ENCODE measurements at regions of chr21 and their contacts with region 1.

Region 1: DNA sequence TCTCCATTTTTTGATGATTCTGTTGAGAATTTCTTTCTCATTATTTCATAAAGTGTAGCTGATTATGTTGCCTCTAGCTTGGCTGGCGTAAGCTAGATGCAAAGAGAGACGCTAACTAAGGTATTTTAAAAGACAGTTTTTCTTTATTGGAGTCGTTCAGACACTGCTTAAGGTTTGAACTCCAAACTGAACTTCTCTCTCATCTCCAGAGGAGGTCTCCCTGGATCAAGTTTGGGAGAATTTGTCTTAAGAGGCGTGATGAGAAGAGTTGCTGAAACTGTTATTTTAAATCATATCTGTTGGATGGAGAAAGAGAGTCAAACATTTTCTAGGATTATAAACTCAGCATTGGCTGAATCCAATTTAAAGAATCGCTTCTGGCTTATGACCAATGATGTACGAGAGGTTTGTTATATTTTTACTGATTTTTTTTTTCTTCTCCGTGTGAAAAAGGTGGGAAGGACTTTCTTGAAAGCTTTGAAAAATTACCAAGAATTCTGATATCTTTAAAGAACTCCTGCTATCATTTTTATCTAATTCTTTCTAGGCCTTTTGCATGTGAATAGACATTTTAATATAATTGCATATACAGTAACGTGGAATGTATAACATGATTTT is 34.0 kb downstream of the MAP3K7CL start:
- H3K4me3 ChIP-seq: no peak overlapping the region
- H3K27ac ChIP-seq: no peak overlapping the region
- H3K4me1 ChIP-seq: no peaks in the 10 kb centered on the region
- CTCF ChIP-seq: no peak

Region 2: GRCh38 chr21:28771790-28772501 is 392.5 kb before region 1 on chr21:
- CTCF ChIA-PET with region 1: no interaction called
- POLR2A ChIA-PET with region 1: no interaction called
- H3K4me3 ChIP-seq: no peak overlapping the region
- H3K27ac ChIP-seq: no peak overlapping the region
- H3K4me1 ChIP-seq: no peaks in the 10 kb centered on the region
- CTCF ChIP-seq: no peak

Region 3: DNA sequence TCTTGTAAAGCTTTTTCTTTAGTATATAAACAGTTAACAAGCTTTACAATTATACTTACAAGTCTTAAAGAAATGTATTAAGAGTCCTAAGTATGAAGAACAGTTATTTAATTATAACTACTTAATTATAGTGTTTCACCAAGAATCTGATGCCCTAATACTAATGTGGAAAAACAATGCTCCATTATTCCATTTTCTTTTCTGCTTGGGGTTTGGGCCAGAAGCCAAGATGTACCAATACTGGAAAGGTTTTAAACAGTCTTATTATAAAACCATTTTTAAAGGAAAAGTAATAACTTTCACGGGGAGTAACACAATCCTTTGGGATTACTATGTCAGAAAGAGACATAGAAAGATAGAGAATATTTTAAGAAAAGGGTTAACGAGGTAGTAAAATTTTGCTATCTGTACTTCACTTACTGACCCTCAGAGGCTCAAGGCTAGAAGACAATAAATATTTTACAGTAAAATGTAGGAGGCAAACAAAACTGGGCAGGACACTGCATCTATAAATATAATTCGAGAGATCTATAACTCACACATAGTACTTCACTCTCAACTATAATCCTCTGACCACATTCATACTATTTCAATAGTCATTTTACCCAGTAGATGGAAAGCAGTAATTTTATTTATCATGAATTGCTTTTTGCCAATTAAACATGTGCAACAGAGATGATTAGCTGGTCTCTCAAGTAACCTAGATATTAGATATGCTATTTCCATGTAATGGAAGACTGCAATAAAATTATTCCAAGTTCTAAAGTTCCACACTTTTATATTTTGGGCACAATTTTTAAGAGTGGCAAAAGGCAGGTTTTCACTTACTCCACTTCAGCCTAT is 235.6 kb before region 1 on chr21:
- CTCF ChIA-PET with region 1: no interaction called
- POLR2A ChIA-PET with region 1: no interaction called
- H3K4me3 ChIP-seq: no peak overlapping the region
- H3K27ac ChIP-seq: no peak overlapping the region
- H3K4me1 ChIP-seq: peaks cover 11% of the 10 kb centered on the region; the same call in 1 of the 2 replicates
- CTCF ChIP-seq: no peak

Region 4: GRCh38 chr21:29091032-29091431 is 73.4 kb before region 1 on chr21:
- CTCF ChIA-PET with region 1: interaction called, 20 read pairs
- POLR2A ChIA-PET with region 1: no interaction called
- H3K4me3 ChIP-seq: no peak overlapping the region
- H3K27ac ChIP-seq: no peak overlapping the region
- H3K4me1 ChIP-seq: no peaks in the 10 kb centered on the region
- CTCF ChIP-seq: no peak

Region 5: DNA sequence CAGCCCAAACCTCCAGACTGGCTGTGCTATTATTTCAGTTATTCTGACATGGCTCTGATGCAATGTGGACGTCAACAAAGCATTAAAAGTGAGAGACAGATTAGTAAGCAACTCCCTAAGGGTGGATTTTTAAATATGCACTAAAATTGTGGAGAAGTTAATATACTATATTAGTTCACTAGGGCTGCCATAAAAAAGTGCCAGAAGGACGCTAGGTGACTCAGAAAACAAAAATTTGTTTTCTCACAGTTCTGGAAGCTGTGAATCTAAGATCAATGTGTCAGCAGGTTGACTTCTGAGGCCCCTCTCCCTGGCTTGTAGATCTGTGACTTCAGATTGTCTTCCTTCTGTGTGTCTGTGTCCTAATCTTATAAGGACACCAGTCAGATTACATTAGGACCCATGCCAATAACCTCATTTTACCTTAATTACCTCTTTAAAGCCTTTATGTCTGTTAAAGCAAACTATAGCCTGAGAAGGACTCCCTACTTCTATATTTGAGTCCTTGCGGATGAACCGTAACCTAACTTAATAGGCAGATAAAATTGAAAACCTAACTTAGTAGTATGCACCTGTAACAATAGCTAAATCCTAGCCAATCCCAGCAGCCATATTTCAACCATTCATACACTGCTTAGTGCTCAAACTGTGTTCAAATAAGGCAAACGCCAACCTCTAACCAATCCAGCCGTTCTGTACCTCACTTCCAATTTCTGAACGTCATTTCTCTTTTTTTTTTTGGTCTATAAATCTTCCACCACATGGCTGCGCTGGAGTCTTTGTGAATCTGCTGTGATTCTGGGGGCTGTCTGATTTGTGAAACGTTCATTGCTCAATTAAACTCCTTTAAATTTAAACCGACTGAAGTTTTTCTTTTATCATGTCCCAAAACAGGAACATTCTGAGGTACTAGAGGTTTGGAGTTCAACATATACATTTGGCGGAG is 68.4 kb after region 1 on chr21:
- CTCF ChIA-PET with region 1: interaction called, 10 read pairs
- POLR2A ChIA-PET with region 1: no interaction called
- H3K4me3 ChIP-seq: no peak overlapping the region
- H3K27ac ChIP-seq: no peak overlapping the region
- H3K4me1 ChIP-seq: no peaks in the 10 kb centered on the region
- CTCF ChIP-seq: no peak

Region 6: DNA sequence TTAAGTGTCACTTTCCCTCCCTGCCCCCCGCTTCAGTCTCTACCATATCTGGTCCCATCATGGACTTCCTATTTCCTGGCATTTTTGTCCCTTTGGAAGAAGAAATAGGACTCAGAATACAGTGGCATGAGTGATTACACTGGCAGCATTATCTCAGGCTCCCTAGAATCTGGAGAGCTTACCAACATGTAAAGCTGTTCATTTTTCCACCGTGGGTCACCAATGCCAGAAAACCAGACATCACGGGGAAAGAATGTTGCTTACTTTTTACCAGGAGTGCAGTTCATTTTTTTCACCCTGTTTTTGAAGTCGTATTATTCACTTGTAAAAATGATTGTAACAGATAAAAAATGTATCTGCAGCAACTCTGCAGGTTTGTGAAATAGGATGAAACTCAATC is 179.1 kb after region 1 on chr21:
- CTCF ChIA-PET with region 1: interaction called, 41 read pairs
- POLR2A ChIA-PET with region 1: no interaction called
- H3K4me3 ChIP-seq: no peak overlapping the region
- H3K27ac ChIP-seq: no peak overlapping the region
- H3K4me1 ChIP-seq: peaks cover 12% of the 10 kb centered on the region
- CTCF ChIP-seq: no peak

Region 7: DNA sequence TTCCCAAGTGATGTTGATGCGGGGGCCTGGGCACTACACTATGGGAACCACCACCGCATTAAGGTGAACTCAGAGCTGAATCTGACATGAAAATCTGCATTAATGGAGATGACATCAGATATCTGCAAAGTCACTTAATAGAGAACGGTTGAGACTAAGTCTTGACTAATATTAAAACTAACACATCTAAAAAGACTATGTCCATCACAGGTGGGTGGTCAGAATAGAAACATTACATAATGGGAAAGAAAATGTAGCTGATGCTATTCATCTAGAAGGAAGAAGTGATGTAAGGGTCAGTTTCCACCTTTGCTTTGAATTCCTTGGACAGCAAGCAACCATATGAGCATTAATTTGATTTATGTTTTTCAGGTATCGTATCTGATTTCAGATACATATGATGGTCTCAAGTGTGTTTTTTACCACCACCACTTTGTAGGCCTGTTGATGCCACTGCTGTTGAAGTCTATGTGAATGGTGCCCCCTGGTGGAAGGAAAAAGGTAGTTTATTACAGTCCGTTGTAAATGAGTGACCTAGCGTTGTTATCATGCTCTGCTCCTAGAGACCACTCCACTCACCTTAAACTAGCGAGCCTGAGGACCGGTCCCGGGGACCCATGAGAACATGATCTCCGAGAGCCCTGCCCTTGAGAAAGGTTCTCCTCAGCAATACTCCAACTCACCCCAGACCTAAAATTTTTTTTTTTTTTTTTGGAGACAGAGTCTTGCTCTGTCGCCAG is 207.8 kb after region 1 on chr21:
- CTCF ChIA-PET with region 1: interaction called, 36 read pairs
- POLR2A ChIA-PET with region 1: interaction called, 9 read pairs
- H3K4me3 ChIP-seq: no peak overlapping the region
- H3K27ac ChIP-seq: no peak overlapping the region
- H3K4me1 ChIP-seq: no peaks in the 10 kb centered on the region
- CTCF ChIP-seq: peak; percentile 66

Region 8: GRCh38 chr21:29403922-29404538 is 239.6 kb after region 1 on chr21:
- CTCF ChIA-PET with region 1: no interaction called
- POLR2A ChIA-PET with region 1: no interaction called
- H3K4me3 ChIP-seq: no peak overlapping the region
- H3K27ac ChIP-seq: no peak overlapping the region
- H3K4me1 ChIP-seq: no peaks in the 10 kb centered on the region
- CTCF ChIP-seq: no peak